HEK293 (cell line): ENCODE measurements at regions of chr9 and their contacts with region 1.

Region 1: DNA sequence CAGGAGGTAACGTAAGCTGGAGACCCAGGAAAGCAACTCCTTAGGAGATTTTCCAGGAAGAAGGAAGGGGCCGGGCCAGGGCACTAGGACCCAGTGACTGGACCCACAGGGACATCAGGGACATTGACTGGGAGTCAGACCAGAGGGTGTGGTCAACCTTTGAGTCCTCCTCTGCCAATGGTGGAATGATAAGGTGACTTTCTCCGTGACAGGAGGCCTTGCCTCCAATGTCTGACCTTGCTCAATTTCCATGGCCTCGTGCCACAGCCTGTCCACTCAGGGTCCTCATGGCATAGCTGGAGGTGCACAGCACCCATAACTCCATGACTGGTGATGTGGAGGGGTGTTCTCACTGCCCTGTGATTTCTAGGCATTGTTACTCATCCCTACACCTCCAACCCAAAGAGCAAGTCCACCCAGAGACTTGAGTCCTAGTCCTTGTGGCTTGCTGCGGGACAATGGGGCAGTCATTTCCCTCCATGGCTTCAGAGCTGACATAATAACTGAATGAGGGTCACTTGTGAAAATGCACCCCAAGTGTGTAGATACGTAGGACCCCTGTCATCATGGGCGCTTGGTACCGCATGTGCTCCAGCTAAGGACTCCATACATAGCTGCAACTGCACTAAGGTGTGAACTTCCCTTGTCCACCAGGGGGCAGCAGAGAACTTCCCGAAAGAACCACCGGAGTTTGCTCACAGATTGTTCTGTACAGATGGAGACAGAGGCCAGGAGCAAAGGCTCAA is 4.1 kb upstream of the AMBP start:
- H3K4me3 ChIP-seq: no peak overlapping the region
- H3K27ac ChIP-seq: no peak overlapping the region
- H3K4me1 ChIP-seq: no peaks in the 10 kb centered on the region
- CTCF ChIP-seq: peak; percentile 60

Region 2: GRCh38 chr9:113955076-113955752 is 127.0 kb before region 1 on chr9:
- CTCF ChIA-PET with region 1: no interaction called
- POLR2A ChIA-PET with region 1: no interaction called
- H3K4me3 ChIP-seq: no peak overlapping the region
- H3K27ac ChIP-seq: no peak overlapping the region
- H3K4me1 ChIP-seq: no peaks in the 10 kb centered on the region
- CTCF ChIP-seq: no peak

Region 3: GRCh38 chr9:114047717-114048116 is 34.5 kb before region 1 on chr9:
- CTCF ChIA-PET with region 1: interaction called, 17 read pairs
- POLR2A ChIA-PET with region 1: no interaction called
- H3K4me3 ChIP-seq: no peak overlapping the region
- H3K27ac ChIP-seq: no peak overlapping the region
- H3K4me1 ChIP-seq: no peaks in the 10 kb centered on the region
- CTCF ChIP-seq: no peak

Region 4: GRCh38 chr9:114059047-114059803 is 23.0 kb before region 1 on chr9:
- CTCF ChIA-PET with region 1: interaction called, 19 read pairs
- POLR2A ChIA-PET with region 1: no interaction called
- H3K4me3 ChIP-seq: no peak overlapping the region
- H3K27ac ChIP-seq: no peak overlapping the region
- H3K4me1 ChIP-seq: no peaks in the 10 kb centered on the region
- CTCF ChIP-seq: no peak

Region 5: DNA sequence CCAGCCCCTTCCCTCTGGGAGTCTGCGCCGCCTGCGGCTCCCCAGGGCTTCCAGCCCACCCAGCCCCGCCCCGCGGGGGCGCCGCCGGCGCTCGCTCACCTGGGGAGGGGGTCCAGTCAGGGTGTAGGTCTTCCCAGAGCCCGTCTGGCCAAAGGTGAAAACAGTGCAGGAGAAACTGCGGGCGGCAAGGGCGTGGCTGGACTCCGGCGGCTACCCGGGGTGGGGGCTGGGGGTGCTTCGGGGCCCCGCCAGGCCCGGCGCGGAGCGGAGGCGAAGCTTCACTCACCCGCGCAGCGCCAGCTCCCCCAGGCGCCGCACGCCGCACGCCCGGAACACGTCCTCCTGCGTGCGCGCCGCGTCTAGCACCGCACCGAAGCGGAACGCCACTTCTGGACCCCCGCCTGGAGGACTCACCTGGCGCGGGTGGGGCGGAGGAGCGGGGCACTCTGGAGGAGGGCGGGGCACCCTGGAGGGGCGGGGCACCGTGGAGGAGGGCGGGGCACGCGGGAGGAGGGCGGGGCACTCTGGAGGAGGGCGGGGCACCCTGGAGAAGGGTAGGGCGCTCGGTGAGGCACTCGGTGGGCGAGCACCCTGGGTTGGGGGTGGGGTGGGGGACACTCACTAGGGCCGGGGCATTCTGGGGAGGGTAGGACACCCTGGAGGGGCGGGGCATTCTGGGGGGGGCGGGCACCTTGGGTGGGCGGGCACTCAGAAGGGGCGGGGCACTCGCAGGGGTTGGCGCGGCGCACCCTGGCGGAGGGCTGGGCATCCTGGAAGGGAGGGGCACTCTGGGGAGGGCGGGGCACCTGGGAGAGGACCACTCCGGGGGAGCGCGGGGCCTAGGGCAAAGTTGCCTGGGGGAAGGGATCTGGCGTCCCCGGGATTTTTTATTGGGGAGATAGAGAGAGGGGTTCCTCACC is 16.1 kb after region 1 on chr9:
- CTCF ChIA-PET with region 1: interaction called, 54 read pairs
- POLR2A ChIA-PET with region 1: no interaction called
- H3K4me3 ChIP-seq: peak overlapping the region; percentile 49
- H3K27ac ChIP-seq: no peak overlapping the region
- H3K4me1 ChIP-seq: no peaks in the 10 kb centered on the region
- CTCF ChIP-seq: no peak

Region 6: GRCh38 chr9:114141553-114142402 is 59.6 kb after region 1 on chr9:
- CTCF ChIA-PET with region 1: interaction called, 11 read pairs
- POLR2A ChIA-PET with region 1: no interaction called
- H3K4me3 ChIP-seq: no peak overlapping the region
- H3K27ac ChIP-seq: no peak overlapping the region
- H3K4me1 ChIP-seq: no peaks in the 10 kb centered on the region
- CTCF ChIP-seq: no peak

Region 7: DNA sequence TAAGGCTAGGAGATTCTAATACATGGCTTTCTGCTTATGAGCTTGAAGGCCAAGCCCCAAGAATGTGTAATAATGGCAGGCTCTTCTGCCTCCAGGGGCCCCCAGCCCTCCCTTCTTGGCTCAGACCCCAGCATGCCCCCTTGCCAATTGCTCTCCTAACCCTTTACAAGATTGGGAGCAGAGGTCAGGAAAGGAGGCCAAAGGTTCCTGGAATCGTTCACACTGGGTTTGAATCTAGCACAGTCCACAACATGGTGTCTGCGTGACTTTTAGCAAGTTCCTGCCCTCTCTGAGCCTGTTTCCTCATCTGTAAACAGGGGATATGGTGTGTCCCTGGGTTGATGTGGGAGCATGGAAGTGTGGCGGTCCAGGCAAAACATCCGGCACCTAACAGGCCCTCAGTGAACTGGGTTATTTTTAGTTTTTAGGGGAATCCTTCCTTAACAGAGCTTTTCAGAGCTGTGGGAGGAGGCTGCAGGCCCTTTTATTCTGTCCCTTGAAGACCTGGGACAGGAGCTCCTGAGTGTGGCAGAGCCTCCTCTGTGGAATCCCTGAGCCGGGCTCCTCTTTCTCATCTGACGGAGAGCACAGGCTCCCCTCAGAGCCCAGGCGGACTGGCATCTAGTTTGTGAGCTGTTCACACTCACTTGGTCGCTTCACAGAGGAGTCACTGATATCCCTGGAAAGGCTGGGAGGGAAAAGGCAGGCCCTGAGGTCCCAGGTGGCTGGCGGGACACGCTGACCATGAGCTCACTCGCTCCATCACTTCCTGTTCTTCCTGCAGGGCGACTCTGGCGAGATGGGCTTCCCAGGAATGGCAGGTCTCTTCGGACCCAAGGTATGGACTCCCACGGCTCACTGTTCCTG is 217.3 kb after region 1 on chr9:
- CTCF ChIA-PET with region 1: interaction called, 144 read pairs
- POLR2A ChIA-PET with region 1: no interaction called
- H3K4me3 ChIP-seq: no peak overlapping the region
- H3K27ac ChIP-seq: no peak overlapping the region
- H3K4me1 ChIP-seq: no peaks in the 10 kb centered on the region
- CTCF ChIP-seq: no peak